ENCODE measurements at regions of chr1 and their contacts with region 1.

Region 1: DNA sequence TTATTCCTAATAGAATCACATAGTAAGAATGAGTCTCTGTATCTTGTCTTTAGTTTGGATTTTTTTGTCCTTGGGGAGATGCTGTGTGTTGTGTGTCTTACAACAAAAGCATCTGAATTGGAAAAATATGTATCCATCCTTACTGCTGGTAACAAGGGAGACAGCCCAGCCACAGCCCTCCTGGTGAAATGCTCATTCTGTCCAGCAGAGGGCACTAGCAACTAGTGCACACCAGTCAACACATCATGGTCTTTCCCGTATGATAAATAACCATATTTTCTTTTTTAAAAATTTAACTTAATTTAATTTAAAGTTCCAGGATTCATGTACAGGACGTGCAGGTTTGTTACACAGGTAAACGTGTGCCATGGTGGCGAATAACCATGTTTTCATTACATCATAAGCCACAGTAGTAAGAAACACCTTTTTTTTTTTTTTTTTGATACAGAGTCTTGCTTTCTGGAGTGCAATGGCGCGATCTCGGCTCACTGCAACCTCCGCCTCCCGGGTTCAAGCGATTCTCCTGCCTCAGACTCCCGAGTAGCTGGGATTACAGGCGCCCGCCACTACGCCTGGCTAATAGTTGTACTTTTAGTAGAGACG is 245.1 kb downstream of the PTBP2 start:
- DNase-seq: peak; percentile 39 to 46
- ATAC-seq: peak in 1 of 2 donors; percentile 50
- H3K4me3 ChIP-seq: no peak overlapping the region
- H3K27ac ChIP-seq: no peak overlapping the region
- H3K4me1 ChIP-seq: no peaks in the 10 kb centered on the region
- H3K27me3 ChIP-seq: no peaks in the 10 kb centered on the region
- CTCF ChIP-seq: peak; percentile 52 to 88 (median 70)
- POLR2A ChIP-seq: no peak

Region 2: DNA sequence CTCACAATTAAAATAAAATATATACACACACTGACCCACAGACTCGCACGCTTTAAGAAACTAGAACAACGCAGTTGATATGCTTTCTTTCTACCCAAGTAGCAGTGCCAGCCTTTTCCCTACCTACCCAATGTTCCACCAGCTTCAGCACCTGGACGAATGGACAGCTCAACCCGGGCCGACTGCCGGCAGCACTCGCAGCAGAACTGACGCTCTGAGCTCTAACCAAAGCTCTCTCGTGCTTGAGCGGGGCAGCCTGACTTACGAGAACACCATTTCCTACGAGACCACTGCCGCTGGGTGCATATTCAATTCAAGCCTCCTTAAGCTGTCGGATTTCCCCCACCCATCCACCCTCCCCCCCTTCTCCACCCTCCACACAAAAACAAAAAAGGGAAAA is 1081.6 kb after region 1 on chr1:
- in situ Hi-C with region 1: loop called in 2 of 4 experiments (anchors 10 to 25 kb)
- intact Hi-C with region 1: loop called (anchors 2 kb)
- DNase-seq: peak; percentile 22 to 34
- ATAC-seq: peak in 1 of 2 donors; percentile 81
- H3K4me3 ChIP-seq: peak overlapping the region in 2 of 4 donors; percentile 5 to 14
- H3K27ac ChIP-seq: no peak overlapping the region
- H3K4me1 ChIP-seq: peaks cover 5 to 11% of the 10 kb centered on the region in 2 donors
- H3K27me3 ChIP-seq: peaks cover 75 to 82% (median 77%) of the 10 kb centered on the region in 3 donors
- CTCF ChIP-seq: no peak
- POLR2A ChIP-seq: no peak

Region 3: GRCh38 chr1:98053471-98054366 is 1087.1 kb after region 1 on chr1:
- in situ Hi-C with region 1: loop called in 2 of 4 experiments (anchors 10 to 25 kb)
- intact Hi-C with region 1: loop called (anchors 2 kb)
- DNase-seq: peak in 1 of 2 donors; percentile 15
- ATAC-seq: peak; percentile 77 to 85
- H3K4me3 ChIP-seq: peak overlapping the region; percentile 49 to 57 (median 53)
- H3K27ac ChIP-seq: no peak overlapping the region
- H3K4me1 ChIP-seq: peaks cover 4 to 9% of the 10 kb centered on the region in 2 donors
- H3K27me3 ChIP-seq: peaks cover 45 to 58% (median 55%) of the 10 kb centered on the region in 3 donors
- CTCF ChIP-seq: peak; percentile 62 to 85 (median 78)
- POLR2A ChIP-seq: no peak